ENCODE measurements at regions of chr14 and their contacts with region 1.

Region 1: GRCh38 chr14:50954811-50955372 is 10.6 kb upstream of the PYGL start:
- DNase-seq: no peak
- H3K4me3 ChIP-seq: no peak overlapping the region
- H3K27ac ChIP-seq: no peak overlapping the region
- H3K4me1 ChIP-seq: no peaks in the 10 kb centered on the region
- H3K27me3 ChIP-seq: no peaks in the 10 kb centered on the region
- CTCF ChIP-seq: peak in 5 of 6 experiments; percentile 33 to 76 (median 69)
- POLR2A ChIP-seq: no peak

Region 2: DNA sequence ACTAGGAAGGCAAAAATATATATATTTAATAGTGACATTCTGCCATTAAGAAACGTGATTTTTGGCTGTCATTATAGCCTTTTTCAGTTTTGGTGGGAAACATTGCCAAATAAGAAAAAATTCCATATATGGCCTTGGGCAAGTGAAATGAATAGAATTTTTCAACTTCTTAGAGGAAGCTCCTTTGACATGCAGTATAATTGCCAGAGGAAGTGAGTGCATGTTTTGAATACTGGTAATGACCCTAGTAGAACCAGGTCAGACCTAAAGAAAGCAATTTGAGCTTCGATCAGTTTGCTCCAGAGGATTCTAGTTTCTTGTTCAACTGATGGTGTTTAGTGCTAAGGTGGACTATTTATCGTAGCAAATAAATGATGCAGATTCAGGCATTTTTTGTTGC is 166.2 kb after region 1 on chr14:
- intact Hi-C with region 1: no loop called
- DNase-seq: no peak
- H3K4me3 ChIP-seq: no peak overlapping the region
- H3K27ac ChIP-seq: no peak overlapping the region
- H3K4me1 ChIP-seq: no peaks in the 10 kb centered on the region
- H3K27me3 ChIP-seq: no peaks in the 10 kb centered on the region
- CTCF ChIP-seq: no peak
- POLR2A ChIP-seq: no peak

Region 3: DNA sequence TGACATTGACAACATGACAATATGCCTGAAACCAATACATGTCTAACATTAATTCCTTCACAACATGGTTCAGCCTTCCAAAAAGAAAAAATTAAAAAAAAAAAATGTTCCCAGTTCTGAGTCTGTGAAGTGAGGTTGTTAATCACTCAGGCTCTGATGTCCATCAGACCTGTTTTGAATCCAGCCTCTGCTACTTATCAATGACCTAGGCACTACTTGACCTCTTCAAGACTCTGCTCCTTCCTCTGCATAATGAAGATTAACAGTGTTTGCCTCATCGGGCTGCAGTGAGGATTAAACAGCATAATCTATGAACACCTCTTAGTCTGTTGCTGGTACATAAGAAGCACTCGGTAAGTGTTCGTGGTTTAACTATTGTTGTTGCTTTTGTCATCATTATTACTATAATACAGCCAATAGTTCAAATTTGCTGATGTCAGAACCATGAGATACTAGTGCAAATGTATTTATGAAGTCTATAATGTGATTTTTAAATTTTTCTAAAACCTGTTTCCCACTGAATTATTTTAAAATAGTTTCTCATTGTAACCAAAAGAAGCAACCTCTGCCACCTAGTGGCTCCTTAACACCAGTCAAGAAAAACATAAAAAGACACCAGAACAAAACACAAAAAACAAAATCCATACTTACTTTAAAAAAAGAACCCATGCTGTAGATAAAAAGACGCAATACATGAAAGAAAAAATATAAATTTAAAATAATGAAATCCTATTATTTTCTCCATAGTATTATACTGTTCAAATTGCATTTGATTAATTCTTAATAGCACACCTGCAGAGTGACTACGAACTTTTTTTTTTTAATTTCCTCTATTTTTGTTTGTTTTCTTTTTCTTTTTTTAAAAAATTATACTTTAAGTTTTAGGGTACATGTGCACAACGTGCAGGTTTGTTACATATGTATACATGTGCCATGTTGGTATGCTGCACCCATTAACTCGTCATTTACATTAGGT is 264.9 kb after region 1 on chr14:
- intact Hi-C with region 1: loop called (anchors 5 kb)
- DNase-seq: peak in 1 of 2 donors; percentile 7
- H3K4me3 ChIP-seq: no peak overlapping the region
- H3K27ac ChIP-seq: no peak overlapping the region
- H3K4me1 ChIP-seq: no peaks in the 10 kb centered on the region
- H3K27me3 ChIP-seq: no peaks in the 10 kb centered on the region
- CTCF ChIP-seq: peak in 4 of 6 experiments; percentile 16 to 71 (median 57)
- POLR2A ChIP-seq: no peak